Activated naive CD4-positive, alpha-beta T cell treated with anti-CD3 and anti-CD28 coated beads for 36 hours (primary cell): ENCODE measurements at regions of chr12 and their contacts with region 1.

Region 1: DNA sequence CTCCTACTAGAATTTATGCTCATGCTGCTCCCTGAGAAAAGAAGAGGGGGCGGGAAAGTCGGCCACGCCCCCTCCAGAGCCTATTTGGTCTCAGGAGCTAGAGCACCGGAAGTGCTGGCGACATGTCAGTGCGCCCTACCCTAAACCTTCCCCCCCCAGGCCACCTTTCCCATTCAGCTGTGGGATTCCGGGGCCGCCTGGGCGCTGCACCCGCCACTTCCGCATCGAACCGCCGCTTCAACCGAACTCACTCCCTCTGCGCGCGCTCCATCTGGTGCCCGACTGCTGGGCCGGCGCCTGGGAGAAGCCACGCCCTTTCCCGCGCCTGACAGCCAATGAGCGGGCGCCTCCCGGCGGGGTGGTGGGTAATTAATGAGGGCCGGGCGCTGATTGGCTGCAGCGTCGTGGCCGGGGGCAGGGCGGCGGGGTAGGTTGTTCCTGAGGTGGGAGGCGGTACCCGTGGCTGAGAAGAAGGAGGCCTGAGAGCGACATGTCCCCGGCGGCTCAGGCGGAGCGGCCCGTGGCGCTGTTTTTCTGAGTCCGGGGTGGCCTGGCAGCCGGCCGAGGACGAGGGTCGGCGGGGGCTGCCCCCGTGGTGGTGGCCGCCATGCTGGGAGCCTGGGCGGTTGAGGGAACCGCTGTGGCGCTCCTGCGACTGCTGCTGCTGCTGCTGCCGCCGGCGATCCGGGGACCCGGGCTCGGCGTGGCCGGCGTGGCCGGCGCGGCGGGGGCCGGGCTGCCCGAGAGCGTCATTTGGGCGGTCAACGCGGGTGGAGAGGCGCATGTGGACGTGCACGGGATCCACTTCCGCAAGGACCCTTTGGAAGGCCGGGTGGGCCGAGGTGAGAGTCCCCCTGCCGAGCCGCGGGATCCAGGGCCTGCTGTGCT is at the start of gene MLEC:
- DNase-seq: peak; percentile 99
- H3K4me3 Mint-ChIP-seq: peak within 1 kb of the TSS; percentile 87
- H3K27ac Mint-ChIP-seq: peak within 1 kb of the TSS; percentile 91
- H3K4me1 Mint-ChIP-seq: peaks cover 42% of the 10 kb centered on the region
- H3K27me3 Mint-ChIP-seq: no peaks in the 10 kb centered on the region
- total RNA-seq, gene MLEC: 78.6 to 89.7 TPM

Region 2: GRCh38 chr12:120292661-120293531 is 394.0 kb before region 1 on chr12 and contains the start of gene RNU4-1:
- CTCF ChIA-PET with region 1: no interaction called
- intact Hi-C with region 1: loop called (anchors 1 kb)
- DNase-seq: peak; percentile 88
- H3K4me3 Mint-ChIP-seq: no peak within 1 kb of the TSS
- H3K27ac Mint-ChIP-seq: no peak within 1 kb of the TSS
- H3K4me1 Mint-ChIP-seq: peaks cover 6% of the 10 kb centered on the region
- H3K27me3 Mint-ChIP-seq: no peaks in the 10 kb centered on the region
- total RNA-seq, gene RNU4-1: 685 to 1,294 TPM

Region 3: GRCh38 chr12:120437754-120438494 is 249.0 kb before region 1 on chr12 and contains the start of gene COX6A1:
- CTCF ChIA-PET with region 1: no interaction called
- intact Hi-C with region 1: loop called (anchors 2 kb)
- DNase-seq: peak; percentile 99
- H3K4me3 Mint-ChIP-seq: peak within 1 kb of the TSS; percentile 92
- H3K27ac Mint-ChIP-seq: peak within 1 kb of the TSS; percentile 93
- H3K4me1 Mint-ChIP-seq: peaks cover 22% of the 10 kb centered on the region
- H3K27me3 Mint-ChIP-seq: no peaks in the 10 kb centered on the region
- total RNA-seq, gene COX6A1: 536 to 540 TPM

Region 4: DNA sequence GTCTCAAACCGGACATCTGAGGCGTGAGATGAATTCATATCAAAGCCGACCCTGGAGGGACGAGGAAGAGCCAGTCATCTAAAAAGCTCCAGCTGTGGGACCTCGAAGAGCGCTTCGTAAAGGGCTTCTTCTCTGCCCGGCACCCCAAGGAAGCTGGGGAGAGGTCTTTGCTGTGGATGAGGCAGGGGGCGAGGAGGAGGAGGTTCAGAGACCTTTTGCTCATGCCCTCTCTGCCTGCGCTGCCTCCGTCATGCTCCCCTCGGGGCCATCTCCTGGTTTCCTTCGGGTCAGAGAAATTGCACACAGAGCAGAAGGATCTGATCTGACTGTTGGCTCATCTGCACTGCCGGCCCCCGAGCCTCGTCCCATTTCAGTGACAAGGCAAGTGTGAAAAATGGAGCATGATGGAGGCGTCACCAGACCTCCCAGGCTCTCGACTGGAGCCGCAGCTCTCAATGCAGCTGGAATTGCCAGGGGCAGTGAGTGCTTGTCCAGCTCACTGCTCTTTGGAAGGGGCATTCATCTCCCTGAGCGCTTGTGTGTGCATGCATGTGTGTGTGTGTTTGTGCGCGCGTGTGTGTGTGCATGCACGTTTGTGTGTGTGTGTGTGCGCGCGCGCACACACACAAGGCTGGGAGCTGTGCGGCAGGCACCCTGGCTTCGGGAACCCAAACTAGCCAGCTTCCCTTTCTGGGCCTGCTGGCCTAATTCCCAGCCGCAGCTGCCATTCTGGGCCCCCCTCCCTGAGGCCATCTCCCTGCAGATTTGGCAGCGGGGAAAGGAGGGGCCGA is 37.3 kb before region 1 on chr12:
- CTCF ChIA-PET with region 1: interaction called, 11 read pairs
- intact Hi-C with region 1: loop called (anchors 1 kb)
- DNase-seq: no peak
- H3K4me3 Mint-ChIP-seq: peak overlapping the region; percentile 20
- H3K27ac Mint-ChIP-seq: no peak overlapping the region
- H3K4me1 Mint-ChIP-seq: peaks cover 12% of the 10 kb centered on the region
- H3K27me3 Mint-ChIP-seq: peaks cover 41% of the 10 kb centered on the region

Region 5: DNA sequence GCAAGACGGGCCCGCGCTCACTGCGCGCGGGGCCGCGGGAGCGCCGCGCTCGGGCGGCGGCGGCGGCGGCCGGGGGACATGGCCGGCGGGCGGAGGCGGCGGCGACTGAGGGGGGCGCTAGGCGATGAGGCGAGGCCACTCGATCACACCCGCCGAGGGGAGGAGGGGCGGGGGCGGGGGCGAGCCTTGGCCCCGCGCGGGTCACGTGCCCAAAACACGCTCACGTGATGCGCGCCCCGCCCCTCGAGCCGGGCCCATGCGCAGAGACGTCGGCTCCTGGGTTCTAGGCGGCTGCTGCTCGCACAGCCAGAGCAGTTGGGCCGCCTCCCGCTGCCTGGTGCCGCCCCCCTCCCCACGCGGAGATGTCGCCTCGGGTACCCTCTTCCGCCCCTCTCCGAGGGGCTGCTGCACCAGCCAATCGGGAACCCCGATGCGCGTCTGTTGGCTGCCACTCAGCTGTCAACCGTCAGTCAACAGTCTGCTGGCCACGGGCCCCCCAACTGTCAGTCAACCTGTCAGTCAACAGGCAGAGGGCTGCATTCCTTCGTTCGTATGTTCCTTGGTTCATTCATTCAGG is 217.4 kb after region 1 on chr12 and contains the start of gene SPPL3:
- CTCF ChIA-PET with region 1: no interaction called
- intact Hi-C with region 1: loop called (anchors 2 kb)
- DNase-seq: peak; percentile 91
- H3K4me3 Mint-ChIP-seq: peak within 1 kb of the TSS; percentile 99
- H3K27ac Mint-ChIP-seq: peak within 1 kb of the TSS; percentile 91
- H3K4me1 Mint-ChIP-seq: peaks cover 28% of the 10 kb centered on the region
- H3K27me3 Mint-ChIP-seq: no peaks in the 10 kb centered on the region
- total RNA-seq, gene SPPL3: 19.8 to 22.2 TPM

Region 6: DNA sequence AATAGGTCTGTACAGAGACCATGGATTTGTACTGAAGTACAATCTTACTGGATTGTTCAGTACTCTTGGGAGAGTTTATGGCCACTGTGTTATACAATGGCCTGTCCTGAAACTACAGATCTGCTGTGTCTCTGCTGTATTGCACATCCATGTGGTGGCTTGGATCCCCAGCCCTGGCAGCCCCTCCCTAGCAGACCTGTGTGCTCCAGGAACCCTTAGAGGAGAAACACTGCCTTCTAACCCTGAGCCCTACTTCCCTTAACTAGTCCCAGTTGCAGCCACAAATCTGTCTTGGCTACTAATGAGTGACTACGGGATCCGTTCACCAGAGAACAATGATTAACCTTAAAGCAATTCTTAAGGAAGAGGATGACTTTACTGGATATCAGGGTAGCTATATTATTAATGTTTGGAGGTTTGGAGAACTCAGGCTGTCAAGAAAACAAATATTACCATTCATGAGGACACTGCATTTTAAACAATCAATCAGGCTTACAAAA is 740.7 kb after region 1 on chr12:
- CTCF ChIA-PET with region 1: no interaction called
- intact Hi-C with region 1: no loop called
- DNase-seq: no peak
- H3K4me3 Mint-ChIP-seq: no peak overlapping the region
- H3K27ac Mint-ChIP-seq: peak overlapping the region; percentile 36
- H3K4me1 Mint-ChIP-seq: no peaks in the 10 kb centered on the region
- H3K27me3 Mint-ChIP-seq: no peaks in the 10 kb centered on the region

Region 7: DNA sequence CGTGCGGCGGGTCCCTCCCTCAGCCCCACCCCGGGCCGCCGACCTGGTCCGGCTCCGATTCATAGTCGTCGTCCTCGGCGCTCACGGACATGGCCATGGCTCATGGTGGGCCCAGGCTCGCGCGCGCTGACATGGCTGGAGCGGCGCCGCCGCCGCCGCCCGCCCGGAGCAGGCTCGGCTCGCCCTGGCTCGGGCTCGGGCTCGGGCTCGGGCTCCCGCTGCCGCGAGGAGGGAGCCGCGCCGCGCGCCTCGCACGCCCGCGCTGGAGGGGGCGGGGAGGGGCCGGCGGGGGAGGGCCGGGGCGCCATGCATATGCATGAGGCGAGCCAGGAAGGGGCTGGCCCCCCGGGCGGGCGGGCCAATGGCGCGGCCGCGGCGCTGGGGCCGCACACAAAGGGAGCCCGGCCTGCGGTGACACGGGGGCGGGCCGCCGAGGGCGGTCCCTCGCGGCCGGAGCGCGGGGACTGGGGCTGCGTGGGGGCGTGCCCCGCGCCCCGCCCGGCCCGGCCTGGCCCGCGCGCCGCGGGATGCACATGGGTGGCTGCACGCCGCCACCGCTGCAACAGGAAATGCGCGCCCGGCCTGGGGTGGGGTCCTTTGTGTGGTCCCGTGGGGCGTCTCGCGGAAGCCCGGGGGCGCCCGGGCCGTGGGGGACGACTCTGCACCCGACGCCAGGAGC is 780.3 kb after region 1 on chr12:
- CTCF ChIA-PET with region 1: no interaction called
- intact Hi-C with region 1: loop called (anchors 2 kb)
- DNase-seq: peak; percentile 87
- H3K4me3 Mint-ChIP-seq: peak overlapping the region; percentile 43
- H3K27ac Mint-ChIP-seq: no peak overlapping the region
- H3K4me1 Mint-ChIP-seq: peaks cover 19% of the 10 kb centered on the region
- H3K27me3 Mint-ChIP-seq: no peaks in the 10 kb centered on the region

Region 8: GRCh38 chr12:121637231-121637914 is 950.4 kb after region 1 on chr12:
- CTCF ChIA-PET with region 1: no interaction called
- intact Hi-C with region 1: no loop called
- DNase-seq: peak; percentile 82
- H3K4me3 Mint-ChIP-seq: peak overlapping the region; percentile 66
- H3K27ac Mint-ChIP-seq: peak overlapping the region; percentile 94
- H3K4me1 Mint-ChIP-seq: peaks cover 51% of the 10 kb centered on the region
- H3K27me3 Mint-ChIP-seq: no peaks in the 10 kb centered on the region